Gastrocnemius medialis (tissue), 4 donors: ENCODE measurements at regions of chr1 and their contacts with region 1.

Region 1: DNA sequence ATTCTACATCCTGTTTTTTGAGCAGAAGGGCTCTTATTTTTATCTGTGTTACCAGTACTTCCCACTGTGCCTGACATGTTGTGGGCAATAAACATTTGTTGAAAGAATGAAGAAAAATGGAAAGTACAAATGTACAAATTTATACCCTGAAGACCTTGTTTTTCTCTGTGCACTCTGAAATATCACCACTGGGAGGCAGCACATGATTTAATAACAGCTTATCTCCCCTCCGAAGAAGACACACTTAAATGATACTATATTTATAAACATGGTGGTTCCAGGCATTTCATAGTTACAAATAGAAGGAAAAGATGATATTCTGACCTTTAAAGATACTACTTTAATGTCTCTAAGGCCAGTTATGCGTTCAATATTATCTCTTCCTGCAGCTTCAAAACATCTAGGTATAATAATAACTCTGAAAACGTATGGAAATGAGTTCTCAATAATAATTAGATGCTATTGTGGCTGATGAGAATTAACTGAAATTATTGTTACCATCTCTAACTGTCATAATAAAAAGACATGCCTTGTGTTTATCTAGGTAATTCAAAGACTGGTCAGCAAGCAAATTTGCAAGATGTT is 12.8 kb downstream of the DYNLT5 start:
- DNase-seq: no peak
- ATAC-seq: peak in 1 of 2 donors; percentile 51
- H3K4me3 ChIP-seq: no peak overlapping the region
- H3K27ac ChIP-seq: no peak overlapping the region
- H3K4me1 ChIP-seq: no peaks in the 10 kb centered on the region
- H3K27me3 ChIP-seq: no peaks in the 10 kb centered on the region
- CTCF ChIP-seq: peak; percentile 49 to 67 (median 58)
- POLR2A ChIP-seq: no peak

Region 2: DNA sequence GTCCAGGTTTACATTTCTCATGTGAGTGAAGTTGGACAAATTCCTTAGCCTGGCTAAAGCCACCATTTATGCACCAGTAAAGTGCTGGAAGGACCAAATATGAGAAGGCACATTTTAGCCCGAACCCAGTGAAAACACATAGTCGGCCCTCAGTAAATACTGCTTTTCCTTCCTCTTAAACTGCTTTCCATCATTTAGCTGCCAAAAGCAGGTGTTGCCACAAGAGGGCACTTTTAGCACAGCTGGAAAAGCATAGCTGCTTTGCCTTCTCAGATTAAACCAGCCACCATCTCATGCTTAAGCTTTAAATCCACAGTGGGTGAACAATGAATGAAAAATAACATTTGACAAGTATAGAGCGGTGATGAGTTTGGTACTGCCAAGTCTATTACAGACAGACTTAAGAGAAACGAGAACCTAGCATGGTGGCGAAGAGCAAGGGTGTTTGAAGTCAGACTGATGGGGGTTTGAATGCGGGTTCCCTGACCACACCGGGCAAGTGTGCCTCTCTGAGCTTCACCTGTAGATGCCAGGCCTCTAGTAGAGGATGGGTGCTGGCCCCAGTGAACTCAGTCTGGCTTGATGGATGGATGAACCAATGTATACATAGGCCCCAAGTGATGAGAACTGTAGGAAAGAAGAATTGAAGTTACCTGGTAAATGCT is 231.1 kb after region 1 on chr1:
- in situ Hi-C with region 1: loop called in 1 of 4 experiments (anchors 25 kb)
- intact Hi-C with region 1: no loop called
- DNase-seq: peak in 1 of 2 donors; percentile 60
- ATAC-seq: peak; percentile 59 to 62
- H3K4me3 ChIP-seq: no peak overlapping the region
- H3K27ac ChIP-seq: no peak overlapping the region
- H3K4me1 ChIP-seq: peaks cover 11 to 14% of the 10 kb centered on the region in 2 donors
- H3K27me3 ChIP-seq: no peaks in the 10 kb centered on the region
- CTCF ChIP-seq: peak; percentile 53 to 72 (median 67)
- POLR2A ChIP-seq: no peak

Region 3: GRCh38 chr1:67149179-67149770 is 384.2 kb after region 1 on chr1:
- in situ Hi-C with region 1: loop called (anchors 5 to 10 kb)
- intact Hi-C with region 1: loop called (anchors 1 kb)
- DNase-seq: peak; percentile 37 to 62
- ATAC-seq: peak; percentile 91 to 99
- H3K4me3 ChIP-seq: no peak overlapping the region
- H3K27ac ChIP-seq: no peak overlapping the region
- H3K4me1 ChIP-seq: no peaks in the 10 kb centered on the region
- H3K27me3 ChIP-seq: no peaks in the 10 kb centered on the region
- CTCF ChIP-seq: peak; percentile 63 to 90 (median 77)
- POLR2A ChIP-seq: no peak

Region 4: DNA sequence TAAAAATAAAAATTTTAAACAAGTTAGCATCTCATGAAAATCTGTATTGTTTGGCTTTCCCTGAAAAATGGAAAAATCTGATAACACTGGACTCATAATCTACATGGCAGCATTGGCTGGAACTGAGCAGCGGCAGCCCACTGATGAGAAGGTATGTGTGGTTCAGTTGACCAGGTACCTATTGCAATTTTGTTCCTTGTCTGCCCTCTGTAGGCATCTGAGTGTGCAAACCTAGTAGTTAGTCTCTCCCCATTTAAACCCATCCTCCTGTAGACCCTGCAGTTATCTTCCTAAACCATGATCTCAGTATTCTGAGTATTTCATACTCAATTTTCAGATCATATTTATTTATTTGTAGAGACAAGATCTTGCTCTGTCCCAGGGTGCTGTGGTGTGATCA is 724.6 kb after region 1 on chr1:
- in situ Hi-C with region 1: loop called in 1 of 4 experiments (anchors 25 kb)
- intact Hi-C with region 1: loop called (anchors 10 kb)
- DNase-seq: no peak
- ATAC-seq: peak; percentile 90 to 92
- H3K4me3 ChIP-seq: no peak overlapping the region
- H3K27ac ChIP-seq: no peak overlapping the region
- H3K4me1 ChIP-seq: no peaks in the 10 kb centered on the region
- H3K27me3 ChIP-seq: no peaks in the 10 kb centered on the region
- CTCF ChIP-seq: peak; percentile 23 to 54 (median 26)
- POLR2A ChIP-seq: no peak